Breast epithelium (tissue), 4 donors: ENCODE measurements at regions of chr14 and their contacts with region 1.

Region 1: GRCh38 chr14:75226755-75227544 is 50.5 kb upstream of the TMED10 start:
- DNase-seq: no peak
- H3K4me3 ChIP-seq: no peak overlapping the region
- H3K27ac ChIP-seq: no peak overlapping the region
- H3K4me1 ChIP-seq: peaks cover 2 to 5% of the 10 kb centered on the region in 2 donors
- H3K27me3 ChIP-seq: no peaks in the 10 kb centered on the region
- CTCF ChIP-seq: no peak
- POLR2A ChIP-seq: no peak

Region 2: DNA sequence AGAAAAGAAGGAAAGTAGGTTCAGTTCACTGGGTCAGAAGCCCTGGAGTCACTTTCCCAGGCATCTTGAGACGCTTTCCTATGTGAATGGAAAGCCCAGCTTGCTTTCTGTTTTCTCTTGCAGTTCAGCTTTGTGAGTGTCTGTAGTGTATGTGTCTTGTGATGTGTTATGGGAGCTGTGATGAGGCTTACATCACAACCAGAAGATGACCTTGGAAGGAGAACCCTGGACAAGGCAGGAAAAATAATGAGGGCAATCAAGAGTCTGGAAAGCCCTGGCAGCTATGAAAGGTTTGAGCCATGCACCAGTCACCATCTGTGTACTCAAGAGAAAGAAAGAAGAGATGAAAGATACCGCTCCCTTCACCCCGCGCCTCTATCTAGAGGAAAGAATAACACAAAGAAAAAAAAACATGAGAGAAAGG is 1410.5 kb before region 1 on chr14:
- intact Hi-C with region 1: no loop called
- DNase-seq: no peak
- H3K4me3 ChIP-seq: no peak overlapping the region
- H3K27ac ChIP-seq: no peak overlapping the region
- H3K4me1 ChIP-seq: no peaks in the 10 kb centered on the region
- H3K27me3 ChIP-seq: no peaks in the 10 kb centered on the region
- CTCF ChIP-seq: no peak
- POLR2A ChIP-seq: no peak

Region 3: GRCh38 chr14:75201087-75201486 is 25.9 kb before region 1 on chr14:
- intact Hi-C with region 1: loop called (anchors 2 kb)
- DNase-seq: no peak
- H3K4me3 ChIP-seq: no peak overlapping the region
- H3K27ac ChIP-seq: peak overlapping the region; percentile 84 to 87
- H3K4me1 ChIP-seq: no peaks in the 10 kb centered on the region
- H3K27me3 ChIP-seq: no peaks in the 10 kb centered on the region
- CTCF ChIP-seq: no peak
- POLR2A ChIP-seq: no peak